ENCODE measurements at regions of chr1 and their contacts with region 1.

Region 1: DNA sequence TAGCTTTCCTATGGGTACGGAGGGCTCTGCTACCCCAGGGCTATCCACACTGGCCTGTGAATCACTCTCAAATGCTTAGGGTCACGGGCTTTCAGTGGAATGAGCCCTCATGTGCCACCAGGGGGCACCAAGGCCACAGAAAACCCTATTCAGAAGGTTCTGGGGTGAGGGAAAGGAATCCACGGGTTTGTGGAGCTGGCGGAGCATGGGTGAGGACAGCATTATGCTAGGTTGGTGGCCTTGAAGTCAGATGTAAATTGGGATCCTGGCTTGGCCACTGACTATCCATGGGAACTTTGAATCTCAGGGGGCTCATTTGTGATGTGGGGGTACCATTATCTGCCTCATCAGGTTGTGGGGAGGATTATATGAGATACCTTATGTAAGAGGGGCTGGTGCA is 5.1 kb upstream of the LAMTOR5 start:
- DNase-seq: peak; percentile 80
- ATAC-seq: peak; percentile 52
- H3K4me3 ChIP-seq: no peak overlapping the region
- H3K4me3 Mint-ChIP-seq: peak overlapping the region; percentile 77
- H3K27ac ChIP-seq: no peak overlapping the region
- H3K27ac Mint-ChIP-seq: peak overlapping the region; percentile 78
- H3K4me1 ChIP-seq: peaks cover 8 to 18% of the 10 kb centered on the region in 2 donors
- H3K4me1 Mint-ChIP-seq: peaks cover 29% of the 10 kb centered on the region
- H3K27me3 ChIP-seq: no peaks in the 10 kb centered on the region
- H3K27me3 Mint-ChIP-seq: no peaks in the 10 kb centered on the region
- CTCF ChIP-seq: peak; percentile 90

Region 2: DNA sequence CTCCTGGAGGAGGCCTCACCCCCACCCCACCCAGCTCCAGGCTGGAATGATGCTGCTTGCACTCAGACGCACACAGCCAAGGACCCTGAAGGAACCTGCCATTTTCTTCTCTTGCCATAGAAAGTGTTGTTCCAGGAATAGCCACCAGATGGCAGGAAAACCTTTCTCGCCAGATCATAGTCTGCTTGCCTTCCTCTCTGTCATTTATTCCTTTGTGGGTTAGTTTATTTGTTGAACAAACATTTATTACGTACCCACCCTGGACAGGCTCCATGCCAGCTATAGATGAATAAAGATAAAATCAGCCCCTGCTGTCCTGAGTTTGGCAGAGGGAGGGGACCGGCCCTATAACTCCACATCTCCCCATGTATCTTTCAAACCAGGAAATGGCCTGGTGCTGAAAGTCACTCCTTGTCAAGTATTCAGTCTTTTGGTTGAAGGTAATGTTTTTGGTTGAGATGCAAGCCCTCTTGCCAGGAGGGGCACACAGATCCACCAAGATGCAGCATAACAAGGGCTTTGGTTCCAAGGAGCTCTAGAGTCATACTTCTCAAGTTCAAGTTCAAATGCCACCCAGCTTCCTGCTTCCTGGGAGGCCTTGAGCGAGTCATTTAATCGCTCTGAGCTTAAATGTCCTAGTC is 209.4 kb before region 1 on chr1:
- CTCF ChIA-PET with region 1: interaction called, 153 read pairs
- POLR2A ChIA-PET with region 1: interaction called, 3 read pairs
- intact Hi-C with region 1: no loop called
- DNase-seq: peak; percentile 84
- ATAC-seq: peak; percentile 71
- H3K4me3 ChIP-seq: no peak overlapping the region
- H3K4me3 Mint-ChIP-seq: no peak overlapping the region
- H3K27ac ChIP-seq: no peak overlapping the region
- H3K27ac Mint-ChIP-seq: no peak overlapping the region
- H3K4me1 ChIP-seq: peaks cover 3 to 7% of the 10 kb centered on the region in 2 donors
- H3K4me1 Mint-ChIP-seq: peaks cover 11% of the 10 kb centered on the region
- H3K27me3 ChIP-seq: no peaks in the 10 kb centered on the region
- H3K27me3 Mint-ChIP-seq: no peaks in the 10 kb centered on the region
- CTCF ChIP-seq: peak; percentile 91

Region 3: GRCh38 chr1:110312188-110313121 is 100.1 kb before region 1 on chr1:
- CTCF ChIA-PET with region 1: interaction called, 36 read pairs
- POLR2A ChIA-PET with region 1: no interaction called
- intact Hi-C with region 1: no loop called
- DNase-seq: peak; percentile 81
- ATAC-seq: peak; percentile 95
- H3K4me3 ChIP-seq: no peak overlapping the region
- H3K4me3 Mint-ChIP-seq: no peak overlapping the region
- H3K27ac ChIP-seq: no peak overlapping the region
- H3K27ac Mint-ChIP-seq: no peak overlapping the region
- H3K4me1 ChIP-seq: peaks cover 0 to 4% of the 10 kb centered on the region in 2 donors
- H3K4me1 Mint-ChIP-seq: no peaks in the 10 kb centered on the region
- H3K27me3 ChIP-seq: no peaks in the 10 kb centered on the region
- H3K27me3 Mint-ChIP-seq: no peaks in the 10 kb centered on the region
- CTCF ChIP-seq: peak; percentile 89

Region 4: GRCh38 chr1:110430366-110430765 is 17.8 kb after region 1 on chr1:
- CTCF ChIA-PET with region 1: interaction called, 10 read pairs
- POLR2A ChIA-PET with region 1: no interaction called
- intact Hi-C with region 1: no loop called
- DNase-seq: no peak
- ATAC-seq: no peak
- H3K4me3 ChIP-seq: no peak overlapping the region
- H3K4me3 Mint-ChIP-seq: no peak overlapping the region
- H3K27ac ChIP-seq: no peak overlapping the region
- H3K27ac Mint-ChIP-seq: no peak overlapping the region
- H3K4me1 ChIP-seq: no peaks in the 10 kb centered on the region
- H3K4me1 Mint-ChIP-seq: no peaks in the 10 kb centered on the region
- H3K27me3 ChIP-seq: peaks cover 0 to 5% (median 3%) of the 10 kb centered on the region in 4 experiments
- H3K27me3 Mint-ChIP-seq: peaks cover 19% of the 10 kb centered on the region
- CTCF ChIP-seq: no peak

Region 5: GRCh38 chr1:110436635-110437034 is 24.1 kb after region 1 on chr1:
- CTCF ChIA-PET with region 1: interaction called, 3 read pairs
- POLR2A ChIA-PET with region 1: no interaction called
- intact Hi-C with region 1: loop called (anchors 1 kb)
- DNase-seq: no peak
- ATAC-seq: no peak
- H3K4me3 ChIP-seq: no peak overlapping the region
- H3K4me3 Mint-ChIP-seq: no peak overlapping the region
- H3K27ac ChIP-seq: no peak overlapping the region
- H3K27ac Mint-ChIP-seq: no peak overlapping the region
- H3K4me1 ChIP-seq: no peaks in the 10 kb centered on the region
- H3K4me1 Mint-ChIP-seq: no peaks in the 10 kb centered on the region
- H3K27me3 ChIP-seq: peaks cover 0 to 6% (median 2%) of the 10 kb centered on the region in 4 experiments
- H3K27me3 Mint-ChIP-seq: peaks cover 42% of the 10 kb centered on the region
- CTCF ChIP-seq: no peak

Region 6: DNA sequence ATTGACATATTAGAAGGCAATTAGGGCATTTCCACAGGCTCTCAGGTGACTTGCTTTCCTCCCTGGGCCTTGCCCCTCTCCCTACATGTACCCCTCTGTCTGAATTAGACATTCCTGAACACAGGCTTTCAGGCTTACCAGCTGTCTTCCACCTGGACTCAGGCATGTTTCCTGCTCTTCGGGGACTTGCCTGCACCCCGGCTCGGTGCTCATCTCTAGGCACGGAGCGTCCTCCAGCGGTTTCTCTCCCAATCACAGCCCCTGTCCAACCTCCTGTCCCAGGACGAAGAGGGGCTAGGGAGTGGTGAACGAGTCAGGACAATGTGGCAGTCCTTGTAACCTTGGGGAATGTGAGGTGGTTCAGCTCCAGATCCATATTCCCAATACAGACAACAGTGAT is 42.6 kb after region 1 on chr1:
- CTCF ChIA-PET with region 1: interaction called, 126 read pairs
- POLR2A ChIA-PET with region 1: interaction called, 4 read pairs
- intact Hi-C with region 1: loop called (anchors 1 kb)
- DNase-seq: no peak
- ATAC-seq: no peak
- H3K4me3 ChIP-seq: no peak overlapping the region
- H3K4me3 Mint-ChIP-seq: no peak overlapping the region
- H3K27ac ChIP-seq: no peak overlapping the region
- H3K27ac Mint-ChIP-seq: no peak overlapping the region
- H3K4me1 ChIP-seq: peaks cover 0 to 2% of the 10 kb centered on the region in 2 donors
- H3K4me1 Mint-ChIP-seq: no peaks in the 10 kb centered on the region
- H3K27me3 ChIP-seq: no peaks in the 10 kb centered on the region
- H3K27me3 Mint-ChIP-seq: peaks cover 13% of the 10 kb centered on the region
- CTCF ChIP-seq: no peak

Measured in B cell (primary cell).